Activated T-helper 1 cell treated with anti-CD3 and anti-CD28 coated beads, Interleukin-12 subunit alpha, Interleukin-12 subunit beta, Interleukin-2, Interleukin-4 antibody, amounts not matched to agents 30 ng/mL and 10 ng/mL and 1 ng/mL, durations not matched to agents 14 hours and 24 hours and 36 hours (primary cell): ENCODE measurements at regions of chr18 and their contacts with region 1.

Region 1: GRCh38 chr18:54776282-54776977 is 51.8 kb upstream of the RAB27B start:
- DNase-seq: peak; percentile 14
- H3K4me3 Mint-ChIP-seq: no peak overlapping the region
- H3K27ac Mint-ChIP-seq: peak overlapping the region; percentile 71
- H3K4me1 Mint-ChIP-seq: peaks cover 15% of the 10 kb centered on the region
- H3K27me3 Mint-ChIP-seq: peaks cover 4% of the 10 kb centered on the region

Region 2: GRCh38 chr18:54712306-54712705 is 64.1 kb before region 1 on chr18:
- intact Hi-C with region 1: loop called (anchors 2 kb)
- DNase-seq: no peak
- H3K4me3 Mint-ChIP-seq: no peak overlapping the region
- H3K27ac Mint-ChIP-seq: no peak overlapping the region
- H3K4me1 Mint-ChIP-seq: peaks cover 50% of the 10 kb centered on the region
- H3K27me3 Mint-ChIP-seq: peaks cover 17% of the 10 kb centered on the region

Region 3: DNA sequence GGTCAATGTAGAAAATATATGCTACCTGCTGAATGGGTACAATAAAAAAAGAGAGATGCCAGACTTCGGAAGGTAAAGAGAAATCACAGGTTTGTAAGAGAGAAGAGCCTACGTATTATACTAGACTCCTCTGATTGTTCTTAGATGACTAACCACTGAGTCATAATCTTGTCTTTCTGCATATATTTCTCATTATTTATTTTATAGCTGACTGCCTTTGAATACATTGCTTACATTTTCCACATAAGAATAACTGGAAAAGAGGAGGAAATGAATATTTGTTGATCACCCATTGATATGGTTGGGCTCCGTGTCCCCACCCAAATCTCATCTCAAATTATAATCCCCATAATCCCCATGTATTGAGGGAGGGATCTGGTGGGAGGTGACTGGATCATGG is 38.4 kb before region 1 on chr18:
- intact Hi-C with region 1: loop called (anchors 1 kb)
- DNase-seq: no peak
- H3K4me3 Mint-ChIP-seq: no peak overlapping the region
- H3K27ac Mint-ChIP-seq: no peak overlapping the region
- H3K4me1 Mint-ChIP-seq: no peaks in the 10 kb centered on the region
- H3K27me3 Mint-ChIP-seq: peaks cover 28% of the 10 kb centered on the region